ENCODE measurements at regions of chr3 and their contacts with region 1.

Region 1: GRCh38 chr3:198061119-198062067 is 101.4 kb downstream of the LMLN start:
- DNase-seq: no peak
- ATAC-seq: no peak
- H3K4me3 ChIP-seq: no peak overlapping the region
- H3K4me3 Mint-ChIP-seq: no peak overlapping the region
- H3K27ac ChIP-seq: no peak overlapping the region
- H3K27ac Mint-ChIP-seq: no peak overlapping the region
- H3K4me1 ChIP-seq: peaks cover 8 to 9% of the 10 kb centered on the region in 2 donors
- H3K4me1 Mint-ChIP-seq: peaks cover 15% of the 10 kb centered on the region
- H3K27me3 ChIP-seq: no peaks in the 10 kb centered on the region
- H3K27me3 Mint-ChIP-seq: peaks cover 6% of the 10 kb centered on the region
- CTCF ChIP-seq: no peak

Region 2: GRCh38 chr3:198071602-198072285 is 10.4 kb after region 1 on chr3:
- CTCF ChIA-PET with region 1: interaction called, 3 read pairs
- POLR2A ChIA-PET with region 1: interaction called, 11 read pairs
- intact Hi-C with region 1: no loop called
- DNase-seq: peak; percentile 31
- ATAC-seq: peak; percentile 97
- H3K4me3 ChIP-seq: no peak overlapping the region
- H3K4me3 Mint-ChIP-seq: peak overlapping the region; percentile 30
- H3K27ac ChIP-seq: no peak overlapping the region
- H3K27ac Mint-ChIP-seq: peak overlapping the region; percentile 43
- H3K4me1 ChIP-seq: peaks cover 16 to 23% of the 10 kb centered on the region in 2 donors
- H3K4me1 Mint-ChIP-seq: peaks cover 29% of the 10 kb centered on the region
- H3K27me3 ChIP-seq: peaks cover 0 to 9% (median 2%) of the 10 kb centered on the region in 4 experiments
- H3K27me3 Mint-ChIP-seq: peaks cover 12% of the 10 kb centered on the region
- CTCF ChIP-seq: peak; percentile 25

Region 3: GRCh38 chr3:198093112-198093679 is 31.8 kb after region 1 on chr3:
- CTCF ChIA-PET with region 1: no interaction called
- POLR2A ChIA-PET with region 1: no interaction called
- intact Hi-C with region 1: no loop called
- DNase-seq: no peak
- ATAC-seq: no peak
- H3K4me3 ChIP-seq: no peak overlapping the region
- H3K4me3 Mint-ChIP-seq: no peak overlapping the region
- H3K27ac ChIP-seq: no peak overlapping the region
- H3K27ac Mint-ChIP-seq: no peak overlapping the region
- H3K4me1 ChIP-seq: peaks cover 0 to under 1% of the 10 kb centered on the region in 2 donors
- H3K4me1 Mint-ChIP-seq: peaks cover 4% of the 10 kb centered on the region
- H3K27me3 ChIP-seq: peaks cover 0 to 27% (median 14%) of the 10 kb centered on the region in 4 experiments
- H3K27me3 Mint-ChIP-seq: peaks cover 40% of the 10 kb centered on the region
- CTCF ChIP-seq: no peak

Measured in B cell (primary cell).